Body of pancreas (tissue), 4 donors: ENCODE measurements at regions of chr11 and their contacts with region 1.

Region 1: DNA sequence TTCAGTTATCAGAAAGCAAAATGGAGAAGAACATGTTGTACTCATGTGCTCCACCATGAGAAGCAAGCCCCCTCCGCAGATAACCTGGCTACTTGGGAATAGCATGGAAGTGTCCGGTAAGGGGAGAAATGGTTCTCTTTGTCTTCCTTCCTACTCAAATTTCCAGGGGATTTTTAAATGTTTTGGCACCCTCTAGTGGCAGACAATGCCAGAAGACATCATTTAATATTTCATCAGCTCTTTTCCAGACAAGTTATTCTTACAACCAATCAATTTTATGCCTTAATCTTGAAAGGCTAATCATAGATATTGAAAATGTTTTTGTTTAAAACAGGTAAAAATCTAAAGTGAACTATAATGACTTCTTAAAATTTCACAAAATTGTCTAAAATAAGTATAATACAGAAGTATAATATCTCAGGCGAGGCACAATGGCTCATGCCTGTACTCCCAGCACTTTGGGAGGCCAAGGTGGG is 15.7 kb downstream of the CRTAM start:
- DNase-seq: peak; percentile 49 to 76 (median 56)
- ATAC-seq: peak; percentile 59
- H3K4me3 ChIP-seq: no peak overlapping the region
- H3K27ac ChIP-seq: no peak overlapping the region
- H3K4me1 ChIP-seq: no peaks in the 10 kb centered on the region
- H3K27me3 ChIP-seq: no peaks in the 10 kb centered on the region
- CTCF ChIP-seq: peak; percentile 45 to 81 (median 74)
- POLR2A ChIP-seq: no peak

Region 2: GRCh38 chr11:122749005-122749687 is 104.9 kb before region 1 on chr11:
- intact Hi-C with region 1: no loop called
- DNase-seq: peak in 2 of 4 donors; percentile 13 to 77
- ATAC-seq: no peak
- H3K4me3 ChIP-seq: no peak overlapping the region
- H3K27ac ChIP-seq: peak overlapping the region in 1 of 4 donors; percentile 38
- H3K4me1 ChIP-seq: no peaks in the 10 kb centered on the region
- H3K27me3 ChIP-seq: no peaks in the 10 kb centered on the region
- CTCF ChIP-seq: no peak
- POLR2A ChIP-seq: peak in 1 of 3 donors; percentile 18

Region 3: GRCh38 chr11:122796128-122796717 is 57.8 kb before region 1 on chr11:
- intact Hi-C with region 1: loop called (anchors 10 kb)
- DNase-seq: peak; percentile 36 to 74 (median 54)
- ATAC-seq: peak; percentile 33
- H3K4me3 ChIP-seq: no peak overlapping the region
- H3K27ac ChIP-seq: no peak overlapping the region
- H3K4me1 ChIP-seq: no peaks in the 10 kb centered on the region
- H3K27me3 ChIP-seq: no peaks in the 10 kb centered on the region
- CTCF ChIP-seq: peak; percentile 53 to 80 (median 71)
- POLR2A ChIP-seq: no peak